Testis (tissue), 5 donors: ENCODE measurements at regions of chr3 and their contacts with region 1.

Region 1: DNA sequence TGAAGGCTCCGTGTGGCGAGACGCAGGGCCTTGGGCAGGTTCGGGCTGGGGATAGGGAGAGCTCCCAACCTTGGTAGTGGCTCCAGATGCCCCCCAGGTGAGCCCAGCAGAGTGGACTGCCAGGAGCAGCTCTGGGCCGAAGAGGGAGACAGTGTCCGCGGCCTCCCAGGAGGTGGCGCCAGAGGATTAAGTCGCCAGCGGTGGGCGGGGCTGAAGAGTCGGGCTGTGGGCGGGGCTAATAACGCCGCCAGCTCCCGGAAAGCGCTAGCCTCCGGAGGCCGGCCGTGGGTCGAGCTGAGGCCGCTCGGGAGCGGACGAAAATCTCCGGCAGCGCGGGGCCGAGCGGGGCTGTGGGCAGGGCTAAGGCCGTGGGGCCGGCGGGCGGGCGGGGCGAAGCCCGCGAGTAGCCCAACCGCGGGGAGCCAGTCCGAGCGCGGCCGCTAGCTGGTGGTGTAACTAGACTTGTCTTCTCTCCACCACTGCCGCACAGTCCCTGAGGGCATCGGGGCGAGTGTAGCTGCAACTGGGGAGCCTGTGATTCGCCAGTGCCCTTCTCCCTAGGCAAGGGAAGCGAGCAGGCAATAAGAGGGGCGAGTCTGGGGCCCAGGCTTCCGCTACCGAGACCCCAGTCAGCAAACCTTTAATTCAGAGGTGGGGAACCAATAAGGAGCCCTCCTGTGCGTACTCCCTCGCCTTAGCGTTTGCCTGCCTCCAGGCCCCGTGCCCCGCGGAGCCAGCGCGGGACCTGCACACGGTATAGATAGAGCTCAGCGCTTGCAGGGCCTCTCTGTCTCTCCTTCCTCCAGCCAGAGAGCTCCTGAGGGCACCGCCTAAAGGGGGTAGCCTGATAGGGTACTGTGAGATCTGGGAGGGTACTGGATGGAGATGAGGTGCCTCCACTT is 14.4 kb upstream of the BSN start:
- DNase-seq: peak; percentile 96
- H3K4me3 ChIP-seq: peak overlapping the region; percentile 57 to 69
- H3K27ac ChIP-seq: peak overlapping the region; percentile 72 to 81
- H3K4me1 ChIP-seq: peaks cover 30% of the 10 kb centered on the region
- H3K27me3 ChIP-seq: no peaks in the 10 kb centered on the region
- CTCF ChIP-seq: peak; percentile 82 to 89 (median 83)
- POLR2A ChIP-seq: no peak

Region 2: DNA sequence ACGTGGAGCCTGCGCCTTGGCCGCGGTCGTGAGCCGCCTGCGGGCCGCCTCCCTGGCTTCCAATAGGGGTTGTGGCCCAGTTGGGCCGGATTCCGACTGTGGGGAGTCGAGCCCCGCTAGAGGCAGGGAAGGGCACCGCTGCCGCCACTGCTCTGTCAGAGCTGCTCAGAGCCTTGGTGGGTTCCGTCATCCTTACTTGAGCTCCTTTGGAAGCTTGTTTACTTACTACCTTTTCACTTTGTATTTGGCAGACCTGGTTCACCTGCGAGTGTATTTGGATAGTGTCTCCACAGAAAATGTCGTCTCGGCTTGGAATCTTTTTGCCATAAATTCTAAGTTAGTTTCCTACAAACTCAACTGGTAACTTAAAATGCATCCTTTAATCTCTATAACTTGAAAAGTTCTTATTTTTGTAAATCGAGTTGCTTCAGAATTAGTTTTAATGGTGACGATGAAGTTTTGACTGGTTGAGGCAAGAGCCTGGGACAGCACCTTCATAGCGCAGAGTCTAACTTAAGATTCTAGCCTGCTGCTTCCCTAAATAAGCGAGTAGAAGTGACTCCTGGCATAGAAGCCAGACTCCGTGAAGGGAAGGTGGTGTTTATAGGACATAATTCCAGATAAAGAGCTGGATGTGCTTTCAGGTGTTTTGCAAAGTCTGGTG is 69.1 kb before region 1 on chr3:
- intact Hi-C with region 1: no loop called
- DNase-seq: no peak
- H3K4me3 ChIP-seq: peak overlapping the region; percentile 88 to 90
- H3K27ac ChIP-seq: peak overlapping the region; percentile 95 to 96
- H3K4me1 ChIP-seq: peaks cover 44% of the 10 kb centered on the region
- H3K27me3 ChIP-seq: no peaks in the 10 kb centered on the region
- CTCF ChIP-seq: no peak
- POLR2A ChIP-seq: no peak

Region 3: GRCh38 chr3:49673715-49674496 is 134.0 kb after region 1 on chr3 and contains the start of gene APEH:
- intact Hi-C with region 1: loop called (anchors 10 kb)
- DNase-seq: peak; percentile 97
- H3K4me3 ChIP-seq: peak within 1 kb of the TSS; percentile 78 to 82
- H3K27ac ChIP-seq: peak within 1 kb of the TSS; percentile 73 to 88
- H3K4me1 ChIP-seq: peaks cover 12% of the 10 kb centered on the region
- H3K27me3 ChIP-seq: no peaks in the 10 kb centered on the region
- CTCF ChIP-seq: no peak
- POLR2A ChIP-seq: peak; percentile 54
- total RNA-seq, gene APEH: 76.7 to 94.5 TPM

Region 4: GRCh38 chr3:49867871-49868321 is 328.0 kb after region 1 on chr3:
- intact Hi-C with region 1: no loop called
- DNase-seq: peak; percentile 23
- H3K4me3 ChIP-seq: no peak overlapping the region
- H3K27ac ChIP-seq: no peak overlapping the region
- H3K4me1 ChIP-seq: peaks cover 11% of the 10 kb centered on the region
- H3K27me3 ChIP-seq: no peaks in the 10 kb centered on the region
- CTCF ChIP-seq: no peak
- POLR2A ChIP-seq: no peak